Activated CD4-positive, alpha-beta T cell treated with anti-CD3 and anti-CD28 coated beads for 36 hours (primary cell): ENCODE measurements at regions of chr2 and their contacts with region 1.

Region 1: GRCh38 chr2:58448065-58448507 is 207.0 kb upstream of the FANCL start:
- DNase-seq: peak; percentile 51
- ATAC-seq: no peak
- H3K4me3 Mint-ChIP-seq: no peak overlapping the region
- H3K27ac Mint-ChIP-seq: no peak overlapping the region
- H3K4me1 Mint-ChIP-seq: no peaks in the 10 kb centered on the region
- H3K27me3 Mint-ChIP-seq: peaks cover 6% of the 10 kb centered on the region

Region 2: DNA sequence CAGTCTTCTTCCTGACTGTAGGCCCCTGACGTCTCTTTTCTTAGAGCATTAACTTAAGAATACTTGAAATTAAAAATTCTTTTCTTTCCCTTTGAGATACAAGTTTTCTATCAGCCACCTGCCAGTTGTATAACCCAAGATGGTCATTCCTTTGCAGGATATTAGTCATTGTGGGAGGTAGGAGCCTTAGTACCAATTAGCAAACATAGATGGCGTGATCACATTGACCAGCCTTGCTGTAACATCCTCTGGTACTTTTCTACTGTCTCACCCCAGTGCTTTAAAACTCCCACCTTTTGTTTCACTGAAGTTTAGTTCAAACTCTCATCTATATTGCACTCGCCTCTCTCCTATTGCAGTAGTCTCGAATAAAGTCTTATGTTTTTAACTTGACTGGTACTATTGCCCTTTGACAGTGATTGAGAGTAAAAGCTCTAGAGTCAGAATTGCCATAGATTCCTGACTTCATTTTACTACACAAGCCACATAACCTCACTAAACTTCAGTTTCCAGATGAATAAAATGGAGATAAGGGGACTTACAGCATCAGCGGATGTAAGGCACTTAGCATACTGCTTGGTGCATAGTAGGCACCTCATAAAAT is 327.4 kb before region 1 on chr2:
- CTCF ChIA-PET with region 1: no interaction called
- POLR2A ChIA-PET with region 1: no interaction called
- intact Hi-C with region 1: loop called in 1 of 2 experiments (anchors 10 kb)
- DNase-seq: no peak
- ATAC-seq: peak; percentile 23
- H3K4me3 Mint-ChIP-seq: no peak overlapping the region
- H3K27ac Mint-ChIP-seq: no peak overlapping the region
- H3K4me1 Mint-ChIP-seq: no peaks in the 10 kb centered on the region
- H3K27me3 Mint-ChIP-seq: no peaks in the 10 kb centered on the region

Region 3: GRCh38 chr2:58376592-58376991 is 71.5 kb before region 1 on chr2:
- CTCF ChIA-PET with region 1: no interaction called
- POLR2A ChIA-PET with region 1: no interaction called
- intact Hi-C with region 1: no loop called
- DNase-seq: no peak
- ATAC-seq: peak; percentile 74
- H3K4me3 Mint-ChIP-seq: no peak overlapping the region
- H3K27ac Mint-ChIP-seq: no peak overlapping the region
- H3K4me1 Mint-ChIP-seq: peaks cover 13% of the 10 kb centered on the region
- H3K27me3 Mint-ChIP-seq: peaks cover 8% of the 10 kb centered on the region

Region 4: DNA sequence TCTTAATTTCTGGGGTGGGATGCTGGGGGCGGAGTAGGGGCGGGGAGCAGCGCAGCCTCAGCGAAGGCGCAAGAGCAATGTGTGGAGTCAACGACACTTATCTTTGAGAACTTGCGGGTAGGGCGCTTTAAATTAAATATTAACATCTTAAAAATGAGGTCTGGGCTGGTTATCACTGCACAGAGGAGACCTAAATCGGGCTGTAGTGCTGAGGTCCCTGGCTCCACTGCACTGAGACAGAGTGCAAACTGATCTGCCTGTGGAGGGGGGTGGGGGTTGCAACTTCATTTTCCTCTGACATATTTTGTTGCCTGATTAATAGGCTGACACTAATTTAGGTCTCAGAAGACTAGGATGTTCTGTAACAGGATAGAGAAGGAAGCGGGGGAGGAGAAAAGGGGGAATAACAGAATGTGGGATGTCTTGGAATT is 46.0 kb after region 1 on chr2:
- CTCF ChIA-PET with region 1: no interaction called
- POLR2A ChIA-PET with region 1: no interaction called
- intact Hi-C with region 1: no loop called
- DNase-seq: no peak
- ATAC-seq: no peak
- H3K4me3 Mint-ChIP-seq: no peak overlapping the region
- H3K27ac Mint-ChIP-seq: no peak overlapping the region
- H3K4me1 Mint-ChIP-seq: no peaks in the 10 kb centered on the region
- H3K27me3 Mint-ChIP-seq: no peaks in the 10 kb centered on the region